HepG2 (cell line): ENCODE measurements at regions of chr1 and their contacts with region 1.

Region 1: GRCh38 chr1:23539698-23540266 is 8.7 kb upstream of the E2F2 start:
- DNase-seq: peak; percentile 71
- ATAC-seq: peak; percentile 78
- H3K4me3 ChIP-seq: peak overlapping the region in 2 of 3 experiments; percentile 23 to 63; a peak in 2 of 6 replicates
- H3K27ac ChIP-seq: no peak overlapping the region
- H3K4me1 ChIP-seq: peaks cover 81% of the 10 kb centered on the region
- H3K27me3 ChIP-seq: no peaks in the 10 kb centered on the region
- CTCF ChIP-seq: peak; percentile 94
- EP300 ChIP-seq: no peak
- POLR2A ChIP-seq: no peak
- RAD21 ChIP-seq: peak; percentile 94

Region 2: DNA sequence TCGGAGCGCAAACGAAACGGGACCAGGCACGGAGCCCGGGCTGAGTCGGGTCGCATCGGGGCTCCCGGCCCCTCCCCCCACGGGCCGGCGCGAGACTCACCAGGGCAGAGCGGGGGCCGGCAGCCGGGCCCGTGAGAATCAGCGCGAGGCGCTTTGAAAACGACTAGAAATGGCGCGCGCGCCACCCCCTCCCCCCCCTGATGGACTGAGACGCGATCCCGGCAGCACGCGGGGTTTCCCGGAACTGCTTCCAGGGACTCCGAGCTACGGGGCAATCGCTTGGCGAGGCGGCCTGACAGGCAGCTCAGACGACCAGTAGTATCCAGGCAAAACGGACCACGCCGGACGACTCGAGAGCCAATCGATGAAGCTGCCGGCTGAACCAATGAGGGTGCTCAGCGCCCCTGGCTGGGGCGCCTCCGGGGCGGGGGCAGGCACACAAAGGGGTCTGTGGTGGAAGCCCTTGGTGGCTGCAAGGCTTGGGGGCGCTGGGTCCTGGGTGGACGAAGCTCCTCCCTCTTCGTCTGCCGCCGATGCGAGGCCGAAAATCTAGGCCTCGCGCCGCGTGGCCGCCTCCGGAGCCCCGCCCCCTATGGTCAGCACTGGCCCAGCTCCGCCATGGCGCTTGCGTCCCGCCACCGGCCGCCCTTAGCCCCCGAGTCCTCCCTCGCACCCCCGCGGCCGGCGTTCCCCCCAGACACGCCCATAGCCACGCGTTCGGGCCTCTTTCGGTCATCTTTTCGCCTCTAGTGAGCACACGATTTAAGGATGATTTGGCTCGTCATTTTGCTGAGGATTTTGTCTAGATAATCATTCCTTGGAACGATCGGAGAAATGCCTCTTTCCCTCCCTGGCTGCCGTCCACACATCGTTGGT is 195.4 kb before region 1 on chr1 and contains the start of gene HNRNPR:
- CTCF ChIA-PET with region 1: no interaction called
- POLR2A ChIA-PET with region 1: no interaction called
- in situ Hi-C with region 1: loop called (anchors 10 kb)
- intact Hi-C with region 1: no loop called
- DNase-seq: peak; percentile 99
- ATAC-seq: peak; percentile 97
- H3K4me3 ChIP-seq: peak within 1 kb of the TSS; percentile 81 to 83 (median 83)
- H3K27ac ChIP-seq: peak within 1 kb of the TSS; percentile 94
- H3K4me1 ChIP-seq: peaks cover 31% of the 10 kb centered on the region
- H3K27me3 ChIP-seq: no peaks in the 10 kb centered on the region; a peak in 2 of 5 replicates
- CTCF ChIP-seq: peak; percentile 36
- EP300 ChIP-seq: peak in 1 of 2 experiments; percentile 42; a peak in 2 of 4 replicates
- POLR2A ChIP-seq: peak; percentile 81 to 83
- RAD21 ChIP-seq: no peak
- total RNA-seq, gene HNRNPR: 216 and 303 TPM in 2 replicates

Region 3: DNA sequence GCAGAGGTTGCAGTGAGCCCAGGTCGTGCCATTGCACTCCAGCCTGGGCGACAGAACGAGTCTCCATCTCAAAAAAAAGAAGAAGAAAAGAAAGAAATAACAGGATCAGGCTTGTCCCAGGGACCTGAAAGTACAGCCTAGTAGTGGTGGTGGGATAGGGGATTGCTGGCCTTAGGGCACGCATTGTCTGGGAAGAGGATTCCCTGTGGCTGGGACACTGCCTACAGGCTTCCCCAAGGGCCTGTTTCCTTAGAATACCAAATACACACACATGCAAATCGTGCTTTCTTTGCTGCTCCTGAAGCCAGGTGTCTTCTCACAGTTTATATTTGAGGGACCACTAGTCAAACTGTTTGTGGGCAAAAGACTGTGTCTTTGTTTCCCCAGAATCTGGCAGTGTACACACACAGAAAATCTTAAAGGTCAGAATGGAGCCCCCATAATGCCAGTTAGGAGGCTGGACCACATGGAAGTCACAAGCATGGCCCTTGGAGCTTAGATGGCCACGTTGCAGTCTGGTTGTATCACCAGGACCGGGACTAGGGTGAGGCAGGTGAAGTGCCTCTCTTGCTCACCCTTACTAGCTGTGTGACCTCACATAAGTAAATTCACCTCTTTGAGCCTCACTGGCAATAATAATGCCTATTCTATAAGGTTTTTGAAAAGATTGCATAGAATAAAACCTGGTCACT is 43.1 kb before region 1 on chr1:
- CTCF ChIA-PET with region 1: interaction called, 33 read pairs
- POLR2A ChIA-PET with region 1: interaction called, 10 read pairs
- in situ Hi-C with region 1: loop called (anchors 5 kb)
- intact Hi-C with region 1: loop called (anchors 1 kb)
- DNase-seq: no peak
- ATAC-seq: peak; percentile 39
- H3K4me3 ChIP-seq: no peak overlapping the region
- H3K27ac ChIP-seq: no peak overlapping the region
- H3K4me1 ChIP-seq: peaks cover 35% of the 10 kb centered on the region
- H3K27me3 ChIP-seq: peaks cover 0 to 3% of the 10 kb centered on the region in 2 experiments; a peak in 1 of 5 replicates
- CTCF ChIP-seq: no peak
- EP300 ChIP-seq: no peak
- POLR2A ChIP-seq: no peak
- RAD21 ChIP-seq: no peak

Region 4: GRCh38 chr1:23567996-23568607 is 28.3 kb after region 1 on chr1:
- CTCF ChIA-PET with region 1: interaction called, 10 read pairs
- POLR2A ChIA-PET with region 1: no interaction called
- in situ Hi-C with region 1: no loop called
- intact Hi-C with region 1: no loop called
- DNase-seq: no peak
- ATAC-seq: no peak; the same call in 2 of the 3 replicates
- H3K4me3 ChIP-seq: peak overlapping the region; percentile 58 to 74 (median 63)
- H3K27ac ChIP-seq: no peak overlapping the region
- H3K4me1 ChIP-seq: peaks cover 72% of the 10 kb centered on the region
- H3K27me3 ChIP-seq: peaks cover 0 to 5% of the 10 kb centered on the region in 2 experiments; a peak in 1 of 5 replicates
- CTCF ChIP-seq: no peak
- EP300 ChIP-seq: no peak
- POLR2A ChIP-seq: no peak
- RAD21 ChIP-seq: no peak

Region 5: GRCh38 chr1:23634842-23635651 is 95.3 kb after region 1 on chr1:
- CTCF ChIA-PET with region 1: interaction called, 137 read pairs
- POLR2A ChIA-PET with region 1: interaction called, 4 read pairs
- in situ Hi-C with region 1: no loop called
- intact Hi-C with region 1: loop called (anchors 1 kb)
- DNase-seq: peak; percentile 53
- ATAC-seq: peak; percentile 63
- H3K4me3 ChIP-seq: peak overlapping the region; percentile 47 to 69 (median 67)
- H3K27ac ChIP-seq: no peak overlapping the region
- H3K4me1 ChIP-seq: peaks cover 27% of the 10 kb centered on the region
- H3K27me3 ChIP-seq: peaks cover 4 to 22% of the 10 kb centered on the region in 2 experiments; a peak in 4 of 5 replicates
- CTCF ChIP-seq: peak; percentile 80
- EP300 ChIP-seq: no peak
- POLR2A ChIP-seq: no peak
- RAD21 ChIP-seq: no peak